ENCODE measurements at regions of chr2 and their contacts with region 1.

Region 1: DNA sequence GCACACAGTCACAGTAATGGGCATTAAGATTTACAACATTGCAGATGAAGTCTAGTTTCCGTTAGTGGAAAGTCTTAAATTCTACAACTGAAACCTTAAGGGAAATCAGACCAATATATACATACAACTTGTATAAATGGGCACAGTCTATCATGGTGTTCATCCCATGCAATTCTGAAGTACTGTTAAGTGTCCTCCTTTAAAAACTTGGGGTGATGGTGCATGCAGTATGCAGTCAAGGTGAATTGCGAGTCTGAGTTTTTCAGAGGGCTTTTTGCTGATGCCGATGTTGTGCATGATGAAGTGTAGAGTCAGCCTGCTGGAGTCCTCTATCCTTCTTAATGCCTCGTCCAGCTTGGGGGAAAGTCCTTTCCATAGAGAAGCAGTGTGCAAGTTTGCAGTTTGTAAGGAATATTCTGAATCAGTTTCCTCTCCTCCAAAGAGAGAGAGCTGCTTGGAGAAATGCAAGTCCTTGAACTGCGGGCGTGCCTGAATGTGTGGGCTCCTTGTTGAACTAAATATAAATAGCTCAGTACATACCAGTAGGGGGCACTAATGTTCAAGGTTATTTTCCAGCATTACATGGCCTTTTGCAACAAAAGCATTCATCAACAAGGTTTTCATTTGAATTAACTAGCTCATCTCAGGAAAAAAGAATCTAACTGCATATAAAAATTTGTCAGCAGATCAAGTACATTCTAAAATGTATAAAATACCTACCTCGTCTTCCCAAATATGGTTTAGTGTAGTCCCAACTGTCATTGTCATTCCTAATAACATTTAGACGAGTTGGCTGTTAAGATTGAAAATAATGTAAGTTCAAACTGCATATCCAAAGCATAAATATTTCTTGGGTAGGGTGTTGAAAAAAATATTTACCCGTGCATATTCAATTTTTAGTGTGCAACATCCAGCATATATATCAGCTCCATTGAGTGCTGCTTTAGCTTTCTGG is 21.3 kb downstream of the HNRNPLL start:
- ATAC-seq: peak in 7 of 8 experiments; percentile 48 to 96 (median 66)
- H3K4me3 ChIP-seq: no peak overlapping the region
- H3K27ac ChIP-seq: no peak overlapping the region
- H3K4me1 ChIP-seq: no peaks in the 10 kb centered on the region

Region 2: DNA sequence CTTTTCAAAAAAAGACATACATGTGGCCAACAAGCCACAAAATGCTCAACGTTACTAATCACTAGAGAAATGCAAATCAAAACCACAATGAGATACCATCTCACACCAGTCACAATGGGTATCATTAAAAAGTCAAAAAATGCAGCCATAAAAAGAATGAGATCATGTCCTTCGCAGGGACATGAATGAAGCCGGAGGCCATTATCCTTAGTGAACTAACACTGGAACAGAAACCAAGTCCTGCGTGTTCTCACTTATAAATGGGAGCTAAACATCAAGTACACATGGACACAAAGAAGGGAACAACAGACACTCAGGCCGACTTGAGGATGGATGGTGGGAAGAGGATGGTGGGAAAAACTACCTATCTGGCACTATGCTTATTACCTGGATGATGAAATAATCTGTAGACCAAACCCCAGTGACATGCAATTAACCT is 186.5 kb before region 1 on chr2:
- in situ Hi-C with region 1: no loop called
- ATAC-seq: peak in 5 of 8 experiments; percentile 31 to 98 (median 79)
- H3K4me3 ChIP-seq: no peak overlapping the region
- H3K27ac ChIP-seq: no peak overlapping the region
- H3K4me1 ChIP-seq: peaks cover 9 to 14% of the 10 kb centered on the region in 2 donors

Region 3: GRCh38 chr2:38835015-38835601 is 253.6 kb after region 1 on chr2:
- in situ Hi-C with region 1: loop called in 1 of 9 experiments (anchors 25 kb)
- ATAC-seq: peak in 3 of 8 experiments; percentile 30 to 67 (median 36)
- H3K4me3 ChIP-seq: no peak overlapping the region
- H3K27ac ChIP-seq: no peak overlapping the region
- H3K4me1 ChIP-seq: no peaks in the 10 kb centered on the region

Region 4: GRCh38 chr2:39202639-39203369 is 621.3 kb after region 1 on chr2:
- in situ Hi-C with region 1: no loop called
- ATAC-seq: peak in 4 of 8 experiments; percentile 24 to 46 (median 44)
- H3K4me3 ChIP-seq: no peak overlapping the region
- H3K27ac ChIP-seq: no peak overlapping the region
- H3K4me1 ChIP-seq: peaks cover 0 to 2% of the 10 kb centered on the region in 2 donors